ENCODE measurements at regions of chr1 and their contacts with region 1.

Region 1: GRCh38 chr1:94025383-94026340 is 95.3 kb downstream of the ABCA4 start:
- DNase-seq: peak in 2 of 9 experiments; percentile 25 to 47
- ATAC-seq: no peak
- H3K4me3 ChIP-seq: no peak overlapping the region
- H3K4me3 Mint-ChIP-seq: no peak overlapping the region
- H3K27ac ChIP-seq: no peak overlapping the region
- H3K27ac Mint-ChIP-seq: no peak overlapping the region
- H3K4me1 ChIP-seq: no peaks in the 10 kb centered on the region
- H3K4me1 Mint-ChIP-seq: no peaks in the 10 kb centered on the region
- H3K27me3 ChIP-seq: no peaks in the 10 kb centered on the region
- H3K27me3 Mint-ChIP-seq: peaks cover 7% of the 10 kb centered on the region
- CTCF ChIP-seq: no peak

Region 2: GRCh38 chr1:93804412-93804811 is 221.2 kb before region 1 on chr1:
- CTCF ChIA-PET with region 1: no interaction called
- POLR2A ChIA-PET with region 1: no interaction called
- intact Hi-C with region 1: no loop called
- DNase-seq: no peak
- ATAC-seq: no peak
- H3K4me3 ChIP-seq: no peak overlapping the region
- H3K4me3 Mint-ChIP-seq: no peak overlapping the region
- H3K27ac ChIP-seq: no peak overlapping the region
- H3K27ac Mint-ChIP-seq: no peak overlapping the region
- H3K4me1 ChIP-seq: no peaks in the 10 kb centered on the region
- H3K4me1 Mint-ChIP-seq: no peaks in the 10 kb centered on the region
- H3K27me3 ChIP-seq: no peaks in the 10 kb centered on the region
- H3K27me3 Mint-ChIP-seq: peaks cover 1% of the 10 kb centered on the region
- CTCF ChIP-seq: no peak

Region 3: DNA sequence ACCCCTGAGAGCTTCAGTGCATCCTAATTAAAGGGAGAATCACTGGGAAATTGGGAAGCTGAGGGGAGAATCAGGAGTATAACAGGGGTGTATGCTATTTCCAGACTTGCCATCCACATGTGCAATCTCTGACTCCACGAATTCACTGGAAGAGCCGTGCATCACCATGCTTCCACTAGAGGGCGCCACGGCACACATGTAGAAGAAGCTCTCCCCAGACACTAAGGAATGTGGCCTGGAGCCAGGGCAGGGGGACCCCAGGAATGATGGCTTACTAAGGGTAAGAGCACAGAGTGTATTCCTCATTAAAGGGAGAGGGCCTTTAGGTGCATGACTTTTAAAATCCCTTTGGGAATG is 13.8 kb after region 1 on chr1:
- CTCF ChIA-PET with region 1: interaction called, 20 read pairs
- POLR2A ChIA-PET with region 1: no interaction called
- intact Hi-C with region 1: no loop called
- DNase-seq: peak; percentile 4 to 67 (median 49)
- ATAC-seq: no peak
- H3K4me3 ChIP-seq: no peak overlapping the region
- H3K4me3 Mint-ChIP-seq: no peak overlapping the region
- H3K27ac ChIP-seq: no peak overlapping the region
- H3K27ac Mint-ChIP-seq: no peak overlapping the region
- H3K4me1 ChIP-seq: no peaks in the 10 kb centered on the region
- H3K4me1 Mint-ChIP-seq: no peaks in the 10 kb centered on the region
- H3K27me3 ChIP-seq: peaks cover 3 to 4% of the 10 kb centered on the region in 2 experiments
- H3K27me3 Mint-ChIP-seq: peaks cover 34% of the 10 kb centered on the region
- CTCF ChIP-seq: peak; percentile 68